Activated CD8-positive, alpha-beta T cell treated with anti-CD3 and anti-CD28 coated beads for 36 hours (primary cell): ENCODE measurements at regions of chr3 and their contacts with region 1.

Region 1: DNA sequence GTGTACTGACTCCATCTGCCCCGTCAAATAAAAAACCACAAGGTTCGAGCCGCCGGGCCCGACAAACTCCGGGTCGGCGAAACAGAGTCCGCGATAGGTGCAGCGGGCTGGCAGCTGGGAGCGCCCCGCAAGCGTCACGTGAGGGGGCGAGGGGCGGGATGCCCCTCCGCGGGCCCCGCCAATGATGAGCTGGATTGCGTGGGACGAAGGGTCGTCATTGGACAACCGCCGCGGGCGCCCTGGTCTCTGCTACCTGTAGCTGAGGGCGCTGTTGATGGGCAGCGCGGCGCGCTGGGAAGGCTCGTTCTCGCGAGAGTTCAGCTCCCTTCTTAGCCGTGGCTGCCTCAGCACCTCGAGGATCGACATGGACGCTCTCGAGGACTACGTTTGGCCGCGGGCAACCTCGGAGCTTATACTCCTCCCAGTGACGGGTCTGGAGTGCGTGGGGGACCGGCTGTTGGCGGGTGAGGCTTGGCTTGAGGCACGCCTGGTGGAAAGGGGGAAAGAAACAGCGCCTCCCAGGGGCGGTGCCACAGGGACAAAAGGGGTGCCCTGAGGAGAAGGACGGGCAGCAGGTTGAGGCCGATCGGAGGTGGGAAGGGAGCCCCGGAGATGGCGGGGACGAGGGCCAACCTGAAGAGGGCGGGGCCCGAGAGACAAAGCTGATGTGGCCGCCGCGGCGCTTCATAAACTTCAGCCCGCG is at the start of gene WDR6:
- DNase-seq: peak; percentile 99
- ATAC-seq: peak; percentile 87
- H3K4me3 Mint-ChIP-seq: peak within 1 kb of the TSS; percentile 91
- H3K27ac Mint-ChIP-seq: peak within 1 kb of the TSS; percentile 98
- H3K4me1 Mint-ChIP-seq: peaks cover 16% of the 10 kb centered on the region
- H3K27me3 Mint-ChIP-seq: no peaks in the 10 kb centered on the region
- CTCF ChIP-seq: no peak
- total RNA-seq, gene WDR6: 111 to 125 TPM

Region 2: DNA sequence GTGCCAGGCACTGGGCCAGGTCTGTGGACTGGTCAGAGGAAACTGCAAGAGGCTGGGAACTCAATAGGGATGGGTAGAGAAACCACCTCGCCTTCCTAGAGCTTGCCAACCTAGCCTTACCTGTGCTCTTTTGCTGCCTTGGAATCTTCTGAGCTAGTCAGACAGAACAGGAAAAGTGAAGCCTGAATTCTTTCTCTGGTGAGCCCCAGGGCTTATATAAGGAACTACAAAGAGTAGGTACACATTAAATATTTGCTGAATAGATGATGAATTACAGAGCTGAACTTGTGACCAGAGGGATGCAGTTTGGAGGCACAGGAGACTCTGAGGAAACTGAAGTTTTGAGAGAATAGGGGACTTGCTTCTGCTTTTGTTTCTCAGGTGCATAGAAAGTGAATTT is 650.8 kb before region 1 on chr3:
- CTCF ChIA-PET with region 1: no interaction called
- POLR2A ChIA-PET with region 1: no interaction called
- intact Hi-C with region 1: no loop called
- DNase-seq: no peak
- ATAC-seq: no peak
- H3K4me3 Mint-ChIP-seq: no peak overlapping the region
- H3K27ac Mint-ChIP-seq: no peak overlapping the region
- H3K4me1 Mint-ChIP-seq: no peaks in the 10 kb centered on the region
- H3K27me3 Mint-ChIP-seq: peaks cover 14% of the 10 kb centered on the region
- CTCF ChIP-seq: no peak

Region 3: GRCh38 chr3:48918388-48919214 is 88.6 kb before region 1 on chr3 and contains the start of gene ARIH2:
- CTCF ChIA-PET with region 1: no interaction called
- POLR2A ChIA-PET with region 1: interaction called, 10 read pairs
- intact Hi-C with region 1: no loop called
- DNase-seq: peak; percentile 93
- ATAC-seq: peak; percentile 79
- H3K4me3 Mint-ChIP-seq: peak within 1 kb of the TSS; percentile 90
- H3K27ac Mint-ChIP-seq: peak within 1 kb of the TSS; percentile 99
- H3K4me1 Mint-ChIP-seq: peaks cover 26% of the 10 kb centered on the region
- H3K27me3 Mint-ChIP-seq: no peaks in the 10 kb centered on the region
- CTCF ChIP-seq: peak; percentile 39
- total RNA-seq, gene ARIH2: 98.2 to 115 TPM

Region 4: GRCh38 chr3:48989796-48990635 is 17.2 kb before region 1 on chr3 and contains the start of gene P4HTM:
- CTCF ChIA-PET with region 1: interaction called, 78 read pairs
- POLR2A ChIA-PET with region 1: interaction called, 56 read pairs
- intact Hi-C with region 1: no loop called
- DNase-seq: peak; percentile 92
- ATAC-seq: peak; percentile 84
- H3K4me3 Mint-ChIP-seq: peak within 1 kb of the TSS; percentile 92
- H3K27ac Mint-ChIP-seq: peak within 1 kb of the TSS; percentile 95
- H3K4me1 Mint-ChIP-seq: peaks cover 41% of the 10 kb centered on the region
- H3K27me3 Mint-ChIP-seq: no peaks in the 10 kb centered on the region
- CTCF ChIP-seq: peak; percentile 11
- total RNA-seq, gene P4HTM: 24.8 to 25.0 TPM

Region 5: GRCh38 chr3:49021813-49022687 is 14.8 kb after region 1 on chr3 and contains the start of gene NDUFAF3:
- CTCF ChIA-PET with region 1: interaction called, 45 read pairs
- POLR2A ChIA-PET with region 1: interaction called, 200 read pairs
- intact Hi-C with region 1: no loop called
- DNase-seq: peak; percentile 95
- ATAC-seq: peak; percentile 74
- H3K4me3 Mint-ChIP-seq: peak within 1 kb of the TSS; percentile 87
- H3K27ac Mint-ChIP-seq: peak within 1 kb of the TSS; percentile 94
- H3K4me1 Mint-ChIP-seq: peaks cover 48% of the 10 kb centered on the region
- H3K27me3 Mint-ChIP-seq: no peaks in the 10 kb centered on the region
- CTCF ChIP-seq: peak; percentile 99
- total RNA-seq, gene NDUFAF3: 90.7 to 95.5 TPM

Region 6: DNA sequence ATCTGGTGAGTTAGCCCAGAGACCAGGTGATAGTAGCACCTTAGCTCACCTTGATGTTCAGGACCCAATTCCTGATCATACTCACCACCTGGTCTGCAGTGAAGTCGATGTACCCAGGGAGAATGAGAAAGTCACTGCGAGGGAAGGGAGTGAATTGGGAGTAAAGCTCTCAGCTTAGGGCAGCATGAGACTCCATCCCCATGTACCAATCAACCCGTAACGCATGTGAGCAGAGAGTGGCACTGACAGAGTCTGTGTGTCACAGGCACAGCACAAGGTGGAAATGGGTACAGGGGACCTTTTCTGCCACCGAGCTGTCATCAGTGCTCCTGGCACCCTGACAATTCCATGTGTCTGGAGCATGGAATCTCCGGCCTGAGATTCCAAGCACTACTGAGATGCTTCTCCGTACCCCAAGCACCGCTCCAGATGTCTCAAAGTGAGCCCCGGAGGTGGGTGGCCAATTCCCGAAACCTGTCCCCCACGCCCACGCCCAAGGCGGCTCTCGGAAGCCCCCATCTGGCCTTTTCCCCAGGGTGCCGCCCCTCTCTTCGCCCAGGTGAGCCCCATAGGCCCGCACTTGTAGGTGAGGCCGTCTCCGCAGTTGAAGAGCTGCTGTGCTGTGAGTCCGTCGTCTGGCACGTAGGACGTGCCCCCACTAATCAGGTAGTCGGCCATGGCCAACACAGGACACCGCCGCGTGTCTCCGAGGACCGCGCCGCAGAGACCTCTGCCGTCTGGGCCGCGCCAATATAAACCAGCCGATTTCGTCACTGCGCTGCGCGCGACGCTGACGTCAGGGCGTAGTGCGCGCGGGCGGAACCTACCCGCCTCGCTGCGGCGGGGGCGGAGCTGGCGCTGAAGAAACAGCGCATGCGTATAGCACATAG is 21.7 kb after region 1 on chr3 and contains the start of gene IMPDH2:
- CTCF ChIA-PET with region 1: interaction called, 4 read pairs
- POLR2A ChIA-PET with region 1: interaction called, 200 read pairs
- intact Hi-C with region 1: no loop called
- DNase-seq: peak; percentile 95
- ATAC-seq: peak; percentile 95
- H3K4me3 Mint-ChIP-seq: peak within 1 kb of the TSS; percentile 88
- H3K27ac Mint-ChIP-seq: peak within 1 kb of the TSS; percentile 92
- H3K4me1 Mint-ChIP-seq: peaks cover 43% of the 10 kb centered on the region
- H3K27me3 Mint-ChIP-seq: no peaks in the 10 kb centered on the region
- CTCF ChIP-seq: no peak
- total RNA-seq, gene IMPDH2: 535 to 557 TPM

Region 7: DNA sequence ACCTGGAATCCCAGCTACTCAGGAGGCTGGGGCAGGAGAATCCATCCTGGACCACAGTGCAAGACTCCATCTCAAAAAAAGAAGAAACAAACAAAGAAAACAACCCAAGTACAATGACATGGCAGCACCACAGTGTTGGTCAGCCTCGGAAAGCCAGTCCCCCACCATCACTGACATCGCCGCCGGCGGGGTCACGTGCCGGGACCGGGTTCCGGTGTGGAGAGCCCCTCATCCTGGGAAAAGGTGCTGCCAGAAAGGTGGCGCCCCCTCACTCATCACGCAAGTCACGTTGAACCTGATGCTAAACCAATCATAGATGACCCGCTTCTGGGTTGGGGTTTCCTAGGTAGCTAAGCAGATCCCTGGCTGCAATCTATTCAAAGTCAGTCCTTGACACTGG is 68.9 kb after region 1 on chr3:
- CTCF ChIA-PET with region 1: no interaction called
- POLR2A ChIA-PET with region 1: no interaction called
- intact Hi-C with region 1: no loop called
- DNase-seq: no peak
- ATAC-seq: no peak
- H3K4me3 Mint-ChIP-seq: no peak overlapping the region
- H3K27ac Mint-ChIP-seq: no peak overlapping the region
- H3K4me1 Mint-ChIP-seq: peaks cover 10% of the 10 kb centered on the region
- H3K27me3 Mint-ChIP-seq: no peaks in the 10 kb centered on the region
- CTCF ChIP-seq: no peak